PC-9 (cell line): ENCODE measurements at regions of chr3 and their contacts with region 1.

Region 1: GRCh38 chr3:125129512-125129962 is 73.7 kb upstream of the HEG1 start:
- DNase-seq: peak; percentile 72 to 81
- H3K4me3 ChIP-seq: no peak overlapping the region
- H3K27ac ChIP-seq: peak overlapping the region; percentile 87
- H3K4me1 ChIP-seq: peaks cover 53% of the 10 kb centered on the region
- H3K27me3 ChIP-seq: no peaks in the 10 kb centered on the region
- CTCF ChIP-seq: no peak

Region 2: DNA sequence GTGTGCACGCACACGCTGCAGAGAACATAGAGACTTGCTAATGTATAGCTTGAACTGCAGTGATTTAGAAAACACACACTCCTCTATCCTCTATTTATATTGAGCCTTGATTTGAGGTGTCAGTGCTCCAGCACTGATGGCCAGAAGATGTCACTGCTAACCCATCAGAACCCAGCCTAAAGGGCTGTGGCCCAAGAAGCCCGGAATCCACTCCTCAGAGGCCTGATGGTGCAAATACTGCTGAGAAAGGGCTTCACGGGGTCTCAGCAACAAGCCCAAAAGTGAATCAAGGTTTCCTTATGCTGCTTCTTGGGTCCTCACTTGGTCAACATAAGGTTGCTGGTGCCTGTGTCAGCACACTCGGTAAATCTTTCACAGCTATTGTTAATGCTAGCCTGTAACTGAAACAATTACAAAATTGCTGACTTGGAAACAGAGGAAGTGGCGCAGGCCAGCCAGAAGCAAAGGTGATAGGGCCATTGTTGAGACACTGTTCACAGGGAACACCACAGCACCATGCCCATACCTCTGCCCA is 134.0 kb before region 1 on chr3:
- CTCF ChIA-PET with region 1: interaction called, 3 read pairs
- POLR2A ChIA-PET with region 1: no interaction called
- intact Hi-C with region 1: loop called (anchors 5 kb)
- DNase-seq: peak; percentile 52 to 54
- H3K4me3 ChIP-seq: no peak overlapping the region
- H3K27ac ChIP-seq: no peak overlapping the region
- H3K4me1 ChIP-seq: no peaks in the 10 kb centered on the region
- H3K27me3 ChIP-seq: no peaks in the 10 kb centered on the region
- CTCF ChIP-seq: peak; percentile 80

Region 3: DNA sequence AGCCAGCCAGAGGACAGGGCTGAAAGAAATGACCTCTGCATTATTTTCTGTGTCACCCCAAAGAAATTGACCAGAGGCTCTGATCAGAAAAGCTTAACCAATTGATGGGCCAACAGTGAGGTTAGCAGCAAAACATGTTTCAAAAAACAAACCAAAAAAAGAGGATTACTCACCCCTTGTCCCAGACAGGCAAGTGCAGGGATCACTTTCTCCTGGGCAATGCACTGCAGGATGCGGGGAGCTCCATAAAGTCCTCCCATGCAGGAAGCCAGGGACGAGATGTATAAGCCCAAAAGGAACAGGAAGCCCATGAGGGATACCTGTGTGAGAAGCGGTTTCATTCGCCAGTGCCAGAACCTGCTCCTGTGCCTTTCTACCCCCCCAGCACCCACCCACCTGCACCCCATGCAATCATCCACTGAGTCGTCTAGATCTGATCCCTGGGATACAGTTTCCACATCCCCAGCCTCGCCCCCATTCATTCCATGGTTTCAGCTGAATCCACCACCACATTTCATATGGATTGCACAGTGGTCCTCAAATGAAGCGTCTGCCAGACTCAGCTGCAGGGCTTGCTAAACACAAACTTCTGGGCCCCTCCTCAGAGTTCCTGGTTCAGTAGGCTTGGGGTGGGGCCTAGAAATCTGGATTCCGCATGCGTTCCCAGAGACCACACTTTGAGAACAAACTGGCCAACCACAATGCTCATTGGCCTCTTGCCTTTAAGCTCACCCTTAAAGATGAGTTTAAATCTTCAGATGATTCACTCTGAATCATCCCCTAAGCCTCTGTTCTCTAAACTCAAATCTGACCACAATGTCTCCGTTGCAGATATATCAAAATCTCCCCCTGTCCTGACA is 19.3 kb before region 1 on chr3:
- CTCF ChIA-PET with region 1: no interaction called
- POLR2A ChIA-PET with region 1: interaction called, 6 read pairs
- intact Hi-C with region 1: loop called (anchors 1 kb)
- DNase-seq: peak; percentile 54 to 69
- H3K4me3 ChIP-seq: no peak overlapping the region
- H3K27ac ChIP-seq: no peak overlapping the region
- H3K4me1 ChIP-seq: peaks cover 36% of the 10 kb centered on the region
- H3K27me3 ChIP-seq: no peaks in the 10 kb centered on the region
- CTCF ChIP-seq: no peak

Region 4: GRCh38 chr3:125141596-125142419 is 12.3 kb after region 1 on chr3:
- CTCF ChIA-PET with region 1: interaction called, 3 read pairs
- POLR2A ChIA-PET with region 1: interaction called, 4 read pairs
- intact Hi-C with region 1: loop called (anchors 1 kb)
- DNase-seq: no peak
- H3K4me3 ChIP-seq: no peak overlapping the region
- H3K27ac ChIP-seq: no peak overlapping the region
- H3K4me1 ChIP-seq: peaks cover 12% of the 10 kb centered on the region
- H3K27me3 ChIP-seq: no peaks in the 10 kb centered on the region
- CTCF ChIP-seq: no peak

Region 5: DNA sequence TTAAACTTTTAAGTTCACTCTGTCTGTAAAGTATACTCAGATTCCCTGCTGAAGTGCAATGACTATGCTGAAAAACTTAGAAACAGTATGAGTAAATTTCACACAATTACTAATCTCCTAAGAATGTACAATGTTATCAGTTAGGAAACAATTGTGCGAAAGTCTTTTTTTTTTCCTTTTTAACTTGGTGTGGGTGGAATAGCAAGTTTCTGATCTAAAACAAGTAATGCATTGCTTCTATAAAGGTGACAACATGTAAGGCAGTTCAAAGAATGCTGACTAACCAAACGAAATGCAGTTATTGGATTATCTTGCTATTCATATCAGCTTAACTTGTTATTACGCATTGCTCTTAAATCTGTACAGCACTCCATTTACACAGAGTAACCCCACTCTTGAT is 102.4 kb after region 1 on chr3:
- CTCF ChIA-PET with region 1: no interaction called
- POLR2A ChIA-PET with region 1: interaction called, 8 read pairs
- intact Hi-C with region 1: loop called (anchors 1 kb)
- DNase-seq: peak in 1 of 2 experiments; percentile 88
- H3K4me3 ChIP-seq: no peak overlapping the region
- H3K27ac ChIP-seq: peak overlapping the region; percentile 95
- H3K4me1 ChIP-seq: peaks cover 21% of the 10 kb centered on the region
- H3K27me3 ChIP-seq: no peaks in the 10 kb centered on the region
- CTCF ChIP-seq: no peak